Common myeloid progenitor, CD34-positive (primary cell): ENCODE measurements at regions of chr11 and their contacts with region 1.

Region 1: GRCh38 chr11:67353317-67354074 is at the start of gene POLD4:
- DNase-seq: peak; percentile 92 to 95 (median 95)
- H3K4me3 ChIP-seq: peak within 1 kb of the TSS; percentile 59 to 95 (median 79)
- H3K27ac ChIP-seq: peak within 1 kb of the TSS; percentile 79 to 92
- H3K4me1 ChIP-seq: peaks cover 7 to 58% (median 36%) of the 10 kb centered on the region in 4 experiments
- H3K27me3 ChIP-seq: no peaks in the 10 kb centered on the region

Region 2: DNA sequence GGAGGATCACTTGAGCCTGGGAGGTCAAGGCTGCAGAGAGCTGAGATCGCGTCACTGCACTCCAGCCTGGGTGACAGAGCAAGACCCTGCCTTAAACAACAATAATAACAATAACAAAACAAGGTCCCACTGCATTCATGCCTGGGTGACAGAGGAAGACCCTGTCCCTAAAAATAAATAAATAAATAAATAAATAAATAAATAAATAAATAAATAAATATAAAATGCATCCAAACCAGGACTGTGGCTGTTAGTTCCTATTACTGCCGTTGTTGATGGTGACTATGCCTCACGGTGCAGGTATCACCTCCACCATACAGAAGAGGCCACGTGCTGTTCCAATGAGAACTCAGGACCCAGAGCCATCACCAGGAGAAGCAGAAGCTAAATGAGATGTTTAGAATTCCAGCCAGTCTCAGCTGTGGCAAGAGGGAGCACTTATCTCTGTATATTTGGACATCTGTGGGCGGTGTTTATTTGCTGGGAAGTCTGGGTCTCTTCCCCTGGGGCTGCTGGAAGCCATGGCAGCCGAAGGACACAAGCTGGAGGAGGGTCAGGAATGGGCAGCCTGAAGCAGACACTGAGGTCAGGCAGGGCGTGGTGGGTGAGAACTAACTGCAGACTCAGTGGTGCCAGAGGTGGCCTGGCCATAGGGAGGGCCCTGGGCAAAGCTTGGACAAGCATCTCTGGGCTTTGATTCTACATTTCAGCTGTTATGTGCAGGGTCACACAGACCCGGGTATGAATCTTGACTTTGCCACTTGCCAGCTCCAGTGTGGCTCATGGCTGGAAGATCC is 356.7 kb before region 1 on chr11:
- CTCF ChIA-PET with region 1: no interaction called
- POLR2A ChIA-PET with region 1: no interaction called
- DNase-seq: no peak
- H3K4me3 ChIP-seq: no peak overlapping the region
- H3K27ac ChIP-seq: no peak overlapping the region
- H3K4me1 ChIP-seq: no peaks in the 10 kb centered on the region
- H3K27me3 ChIP-seq: peaks cover 2 to 22% (median 4%) of the 10 kb centered on the region in 5 experiments

Region 3: GRCh38 chr11:67364783-67365722 is 11.6 kb after region 1 on chr11:
- CTCF ChIA-PET with region 1: interaction called, 892 read pairs
- POLR2A ChIA-PET with region 1: interaction called, 4 read pairs
- DNase-seq: peak in 1 of 3 donors; percentile 38
- H3K4me3 ChIP-seq: peak overlapping the region in 2 of 7 experiments; percentile 4 to 23
- H3K27ac ChIP-seq: no peak overlapping the region
- H3K4me1 ChIP-seq: peaks cover 0 to 65% (median 54%) of the 10 kb centered on the region in 4 experiments
- H3K27me3 ChIP-seq: peaks cover 0 to 4% (median 0%) of the 10 kb centered on the region in 5 experiments

Region 4: GRCh38 chr11:67373925-67374618 is 20.6 kb after region 1 on chr11:
- CTCF ChIA-PET with region 1: interaction called, 892 read pairs
- POLR2A ChIA-PET with region 1: interaction called, 14 read pairs
- DNase-seq: peak; percentile 51 to 80 (median 75)
- H3K4me3 ChIP-seq: peak overlapping the region in 6 of 7 experiments; percentile 35 to 70 (median 52)
- H3K27ac ChIP-seq: peak overlapping the region in 1 of 2 experiments; percentile 72
- H3K4me1 ChIP-seq: peaks cover 0 to 63% (median 59%) of the 10 kb centered on the region in 4 experiments
- H3K27me3 ChIP-seq: peaks cover 0 to 18% (median 0%) of the 10 kb centered on the region in 5 experiments

Region 5: DNA sequence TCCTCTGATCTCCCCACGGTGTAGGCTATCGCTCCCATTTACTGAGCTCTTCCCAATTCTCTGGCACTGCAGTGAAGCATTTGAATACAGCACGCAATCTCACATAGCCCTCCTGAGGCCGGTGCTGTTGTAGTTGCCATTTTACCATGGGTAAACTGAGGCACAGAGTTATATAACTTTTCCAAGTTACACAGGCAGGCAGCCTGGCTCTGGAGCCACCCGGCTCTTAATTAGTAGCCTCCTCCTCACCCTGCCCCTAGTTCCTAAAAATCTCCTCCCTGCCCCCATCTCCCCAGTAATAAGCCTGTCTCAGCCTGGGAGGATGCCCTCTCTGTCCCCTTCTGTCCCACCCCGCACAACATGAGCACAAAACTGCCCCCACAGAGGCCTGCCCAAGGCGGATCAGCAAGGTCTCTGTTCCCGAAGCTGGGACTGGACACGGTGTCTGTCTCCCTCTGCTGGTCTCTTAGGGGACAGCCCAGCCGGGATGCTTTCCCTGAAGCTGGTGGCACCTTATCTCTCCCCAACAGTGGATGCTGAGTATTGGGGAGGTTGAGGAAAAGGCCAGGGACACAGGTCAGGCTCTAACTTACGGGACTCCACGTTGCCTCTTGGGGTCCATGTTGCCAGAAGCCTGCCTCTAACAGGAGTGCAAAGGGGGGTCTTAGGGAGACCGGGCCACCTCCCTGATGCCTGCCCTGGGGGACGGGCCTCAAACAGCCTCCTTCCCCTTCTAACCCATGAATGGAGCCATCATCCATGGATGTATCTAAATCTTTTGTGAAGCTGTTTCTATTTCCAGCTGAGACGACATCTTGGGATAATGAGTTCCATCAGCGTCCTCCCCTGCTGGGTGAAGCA is 29.0 kb after region 1 on chr11:
- CTCF ChIA-PET with region 1: interaction called, 892 read pairs
- POLR2A ChIA-PET with region 1: interaction called, 10 read pairs
- DNase-seq: peak; percentile 70 to 82 (median 73)
- H3K4me3 ChIP-seq: no peak overlapping the region
- H3K27ac ChIP-seq: no peak overlapping the region
- H3K4me1 ChIP-seq: peaks cover 0 to 46% (median 29%) of the 10 kb centered on the region in 4 experiments
- H3K27me3 ChIP-seq: no peaks in the 10 kb centered on the region

Region 6: DNA sequence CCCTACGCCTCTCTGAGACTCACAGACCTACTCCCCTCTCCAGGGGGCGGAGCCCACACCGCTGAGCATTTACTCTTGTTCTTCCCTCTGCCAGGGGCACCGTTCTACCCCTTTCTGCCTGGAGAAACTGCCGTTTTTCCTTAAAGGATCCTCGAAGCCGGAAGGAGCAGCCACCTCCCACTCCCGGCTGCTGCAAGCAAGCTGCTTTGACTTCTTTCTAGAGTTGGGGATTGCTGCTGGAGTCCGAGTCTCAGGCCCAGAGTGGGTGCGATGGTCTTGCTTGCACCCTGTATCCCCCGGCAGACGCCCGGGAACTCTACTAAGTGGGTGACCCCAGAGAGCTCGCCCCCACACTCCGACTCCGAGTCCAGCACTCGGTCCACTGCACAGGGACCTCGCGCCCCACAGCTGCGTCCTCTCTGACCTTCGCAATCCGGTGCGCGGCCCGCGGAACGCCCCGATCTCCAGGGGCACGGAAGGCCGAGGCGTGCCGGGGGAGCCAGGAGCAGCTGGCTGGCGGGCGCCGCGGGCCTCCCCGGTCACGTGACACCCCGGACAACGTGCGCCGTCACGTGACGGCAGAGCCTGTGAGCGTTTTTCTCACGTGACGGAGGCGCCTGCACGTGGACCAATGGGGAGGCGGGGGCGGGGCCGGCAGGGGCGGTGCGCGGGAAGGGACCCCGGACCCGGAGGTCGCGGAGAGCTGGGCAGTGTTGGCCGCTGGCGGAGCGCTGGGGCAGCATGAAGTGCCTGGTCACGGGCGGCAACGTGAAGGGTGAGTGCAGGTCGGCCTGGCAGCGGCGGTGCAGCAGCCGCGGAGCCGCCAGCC is 38.0 kb after region 1 on chr11 and contains the start of gene RAD9A:
- CTCF ChIA-PET with region 1: interaction called, 892 read pairs
- POLR2A ChIA-PET with region 1: interaction called, 4 read pairs
- DNase-seq: peak; percentile 93 to 96 (median 95)
- H3K4me3 ChIP-seq: peak within 1 kb of the TSS; percentile 46 to 90 (median 74)
- H3K27ac ChIP-seq: peak within 1 kb of the TSS; percentile 50 to 79
- H3K4me1 ChIP-seq: peaks cover 3 to 47% (median 23%) of the 10 kb centered on the region in 4 experiments
- H3K27me3 ChIP-seq: no peaks in the 10 kb centered on the region